AG04450 (cell line): ENCODE measurements at regions of chrX and their contacts with region 1.

Region 1: GRCh38 chrX:77910108-77910840 is at the start of gene ATP7A:
- DNase-seq: peak; percentile 85
- H3K4me3 ChIP-seq: peak within 1 kb of the TSS; percentile 75
- H3K27ac ChIP-seq: peak within 1 kb of the TSS; percentile 75
- H3K27me3 ChIP-seq: no peaks in the 10 kb centered on the region
- CTCF ChIP-seq: peak; percentile 54
- polyA plus RNA-seq, gene ATP7A: 14.5 and 18.5 TPM in 2 replicates

Region 2: GRCh38 chrX:77668391-77669237 is 241.7 kb before region 1 on chrX:
- CTCF ChIA-PET with region 1: no interaction called
- POLR2A ChIA-PET with region 1: no interaction called
- DNase-seq: no peak
- H3K4me3 ChIP-seq: no peak overlapping the region
- H3K27ac ChIP-seq: no peak overlapping the region
- H3K27me3 ChIP-seq: no peaks in the 10 kb centered on the region
- CTCF ChIP-seq: no peak

Region 3: GRCh38 chrX:77742788-77743476 is 167.3 kb before region 1 on chrX:
- CTCF ChIA-PET with region 1: no interaction called
- POLR2A ChIA-PET with region 1: no interaction called
- DNase-seq: no peak
- H3K4me3 ChIP-seq: no peak overlapping the region
- H3K27ac ChIP-seq: no peak overlapping the region
- H3K27me3 ChIP-seq: no peaks in the 10 kb centered on the region
- CTCF ChIP-seq: no peak

Region 4: GRCh38 chrX:77899081-77899828 is 11.0 kb before region 1 on chrX and contains the start of gene COX7B:
- CTCF ChIA-PET with region 1: interaction called, 20 read pairs
- POLR2A ChIA-PET with region 1: interaction called, 13 read pairs
- DNase-seq: peak; percentile 91
- H3K4me3 ChIP-seq: peak within 1 kb of the TSS; percentile 74
- H3K27ac ChIP-seq: peak within 1 kb of the TSS; percentile 39
- H3K27me3 ChIP-seq: no peaks in the 10 kb centered on the region
- CTCF ChIP-seq: peak; percentile 51
- polyA plus RNA-seq, gene COX7B: 753 and 835 TPM in 2 replicates

Region 5: DNA sequence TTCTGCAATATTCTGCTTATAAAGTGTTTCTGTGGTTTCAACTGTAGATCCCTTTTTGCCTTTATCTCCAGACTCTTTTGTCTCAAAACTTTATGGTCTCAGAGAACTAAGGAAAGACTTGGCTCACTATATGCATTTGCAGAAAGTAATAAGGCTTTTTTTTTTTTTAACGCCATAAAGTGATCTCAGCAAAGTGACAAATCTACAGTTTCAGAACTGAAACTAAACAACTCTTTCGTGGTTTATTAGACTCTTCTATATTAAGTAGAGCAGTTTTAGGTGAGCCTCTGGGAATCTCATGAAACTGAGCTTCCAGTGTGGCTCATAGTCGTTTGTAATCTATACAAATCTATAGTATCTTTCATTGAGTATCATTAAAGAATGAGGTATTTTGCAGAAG is 15.5 kb after region 1 on chrX:
- CTCF ChIA-PET with region 1: no interaction called
- POLR2A ChIA-PET with region 1: no interaction called
- DNase-seq: no peak
- H3K4me3 ChIP-seq: no peak overlapping the region
- H3K27ac ChIP-seq: no peak overlapping the region
- H3K27me3 ChIP-seq: no peaks in the 10 kb centered on the region
- CTCF ChIP-seq: no peak

Region 6: DNA sequence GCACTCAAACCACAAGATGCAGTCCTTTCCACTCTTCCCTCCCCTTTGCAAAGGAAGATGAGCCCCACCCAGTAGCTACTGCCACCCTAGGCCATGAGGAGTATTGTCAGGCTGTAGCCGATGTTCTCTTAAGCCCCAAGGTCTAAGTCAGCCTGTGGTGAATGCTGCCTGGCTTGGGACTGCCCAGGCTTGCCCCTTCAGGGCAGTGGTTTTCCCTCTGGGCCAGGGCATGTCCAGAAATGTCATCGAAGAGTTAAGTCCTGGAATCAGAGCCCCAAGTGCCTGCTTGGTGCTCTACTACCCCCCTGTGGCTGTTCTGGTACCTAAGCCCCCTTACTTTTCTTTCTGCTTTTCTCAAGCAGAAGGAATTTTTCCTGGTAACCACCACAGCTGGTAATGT is 182.0 kb after region 1 on chrX:
- CTCF ChIA-PET with region 1: interaction called, 10 read pairs
- POLR2A ChIA-PET with region 1: interaction called, 3 read pairs
- DNase-seq: peak; percentile 37
- H3K4me3 ChIP-seq: no peak overlapping the region
- H3K27ac ChIP-seq: no peak overlapping the region
- H3K27me3 ChIP-seq: no peaks in the 10 kb centered on the region
- CTCF ChIP-seq: peak; percentile 69